Activated naive CD4-positive, alpha-beta T cell treated with anti-CD3 and anti-CD28 coated beads for 36 hours (primary cell): ENCODE measurements at regions of chr4 and their contacts with region 1.

Region 1: GRCh38 chr4:154277172-154277571 is 214.4 kb downstream of the DCHS2 start:
- DNase-seq: no peak
- H3K4me3 Mint-ChIP-seq: no peak overlapping the region
- H3K27ac Mint-ChIP-seq: no peak overlapping the region
- H3K4me1 Mint-ChIP-seq: no peaks in the 10 kb centered on the region
- H3K27me3 Mint-ChIP-seq: peaks cover 29% of the 10 kb centered on the region

Region 2: GRCh38 chr4:155609455-155610059 is 1332.4 kb after region 1 on chr4:
- CTCF ChIA-PET with region 1: no interaction called
- intact Hi-C with region 1: loop called (anchors 5 kb)
- DNase-seq: no peak
- H3K4me3 Mint-ChIP-seq: no peak overlapping the region
- H3K27ac Mint-ChIP-seq: no peak overlapping the region
- H3K4me1 Mint-ChIP-seq: no peaks in the 10 kb centered on the region
- H3K27me3 Mint-ChIP-seq: peaks cover 2% of the 10 kb centered on the region